ENCODE measurements at regions of chr3 and their contacts with region 1.

Region 1: GRCh38 chr3:100254168-100254777 is 6.5 kb upstream of the TBC1D23 start:
- DNase-seq: peak; percentile 59
- ATAC-seq: peak; percentile 92 to 96

Region 2: GRCh38 chr3:99842826-99843589 is 411.3 kb before region 1 on chr3:
- intact Hi-C with region 1: loop called (anchors 2 to 5 kb)
- DNase-seq: no peak
- ATAC-seq: peak; percentile 68 to 78

Region 3: DNA sequence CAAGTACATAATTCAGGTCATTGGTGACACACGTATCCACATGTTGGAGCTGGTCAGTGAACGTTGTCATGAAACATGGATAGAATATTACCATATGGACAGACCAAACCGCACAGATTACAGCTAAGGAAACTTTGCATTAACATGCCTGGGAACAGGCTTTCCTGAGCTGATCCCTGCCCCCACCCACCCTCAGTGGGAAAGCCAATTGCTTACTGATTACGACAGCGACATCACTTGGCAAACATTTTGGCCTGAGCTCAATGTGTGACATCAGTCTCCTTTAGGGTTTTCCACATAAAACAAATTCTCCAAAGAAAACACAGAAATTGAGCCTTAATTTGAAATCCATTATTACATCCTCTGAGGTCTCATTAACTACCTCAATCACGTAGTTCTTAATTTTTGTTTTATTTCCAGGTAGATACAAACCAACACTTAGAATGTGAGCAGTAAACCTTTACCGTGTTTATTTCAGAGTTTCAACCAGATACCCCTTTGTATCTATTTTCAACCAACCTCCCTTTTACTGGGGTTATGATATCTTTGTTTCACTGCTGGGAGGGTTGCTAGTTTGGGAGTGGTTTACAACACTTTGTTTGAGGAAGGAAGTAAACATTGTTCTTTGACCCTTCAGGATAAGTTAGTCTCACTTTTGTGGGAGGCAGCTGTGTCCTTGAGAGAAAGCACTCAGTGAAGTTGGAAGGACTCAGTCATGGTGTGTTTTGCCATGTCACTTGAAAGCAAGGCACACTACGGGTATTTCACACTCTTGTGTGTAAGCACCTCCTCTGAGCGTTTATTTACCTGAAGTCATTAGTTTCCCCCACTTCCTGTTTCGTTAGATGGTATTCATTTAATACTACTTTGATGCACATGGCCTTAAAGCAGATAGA is 333.5 kb before region 1 on chr3:
- intact Hi-C with region 1: loop called in 1 of 2 experiments (anchors 10 kb)
- DNase-seq: peak; percentile 84
- ATAC-seq: peak; percentile 75 to 86

Region 4: GRCh38 chr3:100002599-100003350 is 251.5 kb before region 1 on chr3:
- intact Hi-C with region 1: no loop called
- DNase-seq: no peak
- ATAC-seq: peak; percentile 42 to 96

Region 5: DNA sequence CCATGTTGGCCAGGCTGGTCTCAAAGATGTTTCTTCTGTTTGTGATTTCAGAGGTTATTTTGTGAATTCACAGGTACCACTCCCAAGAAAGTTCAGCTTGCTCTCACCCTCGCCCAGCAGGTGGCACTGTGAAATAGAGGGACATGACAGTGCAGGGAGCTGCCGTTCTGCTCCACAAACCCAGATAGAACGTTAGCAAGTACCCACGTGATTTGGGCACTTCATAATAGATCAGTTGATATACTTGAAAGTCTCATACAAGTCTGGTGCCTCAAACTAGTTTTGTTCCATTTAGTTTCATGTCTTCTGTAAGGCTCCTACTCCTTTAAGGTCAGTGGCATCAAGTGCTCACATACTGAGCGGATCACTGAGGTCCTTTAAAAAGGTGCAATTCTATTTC is 185.4 kb before region 1 on chr3:
- intact Hi-C with region 1: loop called (anchors 1 to 5 kb)
- DNase-seq: peak; percentile 81
- ATAC-seq: peak; percentile 86 to 87

Region 6: DNA sequence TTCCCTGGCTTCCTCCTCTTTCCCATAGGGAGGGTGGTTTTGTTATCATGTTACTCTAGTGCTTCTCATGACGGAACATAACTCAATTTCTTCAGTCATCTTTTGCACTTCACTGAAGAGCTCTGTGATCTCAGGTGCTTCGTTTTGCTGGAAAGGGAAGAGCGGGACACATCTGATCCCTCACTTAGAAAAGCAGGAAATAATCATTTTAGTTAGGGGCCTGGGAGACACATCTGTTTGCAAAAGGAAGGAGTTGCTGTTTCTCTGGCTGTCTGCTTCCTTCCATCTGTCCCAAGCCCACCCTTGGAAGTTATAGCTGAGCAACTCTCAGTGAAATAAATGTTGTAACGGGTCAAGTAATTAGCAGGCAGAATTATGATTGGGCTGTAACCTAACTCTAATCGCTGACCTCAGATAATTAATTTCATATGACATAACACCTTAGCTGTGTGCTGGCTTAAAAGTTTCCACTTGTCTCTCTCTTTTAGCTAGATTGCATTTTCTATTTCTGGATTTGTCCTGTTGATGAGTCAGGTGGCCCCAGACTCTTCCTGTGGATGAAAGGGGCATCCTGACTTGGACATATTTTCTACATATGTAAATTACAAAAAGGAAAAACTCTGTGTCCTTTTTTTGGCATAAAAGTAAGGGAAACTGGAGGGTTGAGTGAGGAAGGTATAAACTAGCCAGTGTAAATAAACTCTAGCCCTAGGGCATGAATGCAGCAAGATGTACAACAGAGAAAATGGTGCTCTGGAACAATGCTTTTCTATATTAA is 128.9 kb before region 1 on chr3:
- intact Hi-C with region 1: no loop called
- DNase-seq: no peak
- ATAC-seq: peak; percentile 29 to 43